B cell (primary cell): ENCODE measurements at regions of chr7 and their contacts with region 1.

Region 1: DNA sequence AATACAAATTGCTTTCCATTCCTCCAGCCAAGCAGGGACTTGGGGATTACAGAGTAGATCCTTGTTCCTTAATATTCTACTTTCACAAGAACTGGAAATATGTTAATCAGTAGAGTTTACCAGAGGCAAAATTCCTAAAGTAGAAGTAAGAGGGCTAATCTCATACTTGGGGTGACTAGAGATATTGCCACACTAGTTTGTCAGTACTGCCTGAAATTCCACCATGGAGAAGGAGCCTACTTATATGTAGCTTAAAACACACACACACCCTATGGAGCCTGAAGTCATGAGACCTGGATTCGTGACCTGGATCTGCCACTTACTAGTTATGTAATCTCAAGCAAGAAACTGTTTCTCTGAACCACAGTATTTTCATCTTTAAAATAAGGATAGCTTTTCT is 33.9 kb downstream of the STRIP2 start:
- DNase-seq: no peak
- ATAC-seq: no peak
- H3K4me3 ChIP-seq: no peak overlapping the region
- H3K4me3 Mint-ChIP-seq: no peak overlapping the region
- H3K27ac ChIP-seq: no peak overlapping the region
- H3K27ac Mint-ChIP-seq: no peak overlapping the region
- H3K4me1 ChIP-seq: no peaks in the 10 kb centered on the region
- H3K4me1 Mint-ChIP-seq: peaks cover 1% of the 10 kb centered on the region
- H3K27me3 ChIP-seq: no peaks in the 10 kb centered on the region
- H3K27me3 Mint-ChIP-seq: no peaks in the 10 kb centered on the region
- CTCF ChIP-seq: no peak

Region 2: GRCh38 chr7:129343099-129343700 is 124.9 kb before region 1 on chr7:
- CTCF ChIA-PET with region 1: interaction called, 24 read pairs
- POLR2A ChIA-PET with region 1: no interaction called
- intact Hi-C with region 1: no loop called
- DNase-seq: peak; percentile 58
- ATAC-seq: no peak
- H3K4me3 ChIP-seq: no peak overlapping the region
- H3K4me3 Mint-ChIP-seq: no peak overlapping the region
- H3K27ac ChIP-seq: no peak overlapping the region
- H3K27ac Mint-ChIP-seq: no peak overlapping the region
- H3K4me1 ChIP-seq: no peaks in the 10 kb centered on the region
- H3K4me1 Mint-ChIP-seq: peaks cover 4% of the 10 kb centered on the region
- H3K27me3 ChIP-seq: no peaks in the 10 kb centered on the region
- H3K27me3 Mint-ChIP-seq: no peaks in the 10 kb centered on the region
- CTCF ChIP-seq: peak; percentile 90

Region 3: GRCh38 chr7:129401967-129402860 is 65.9 kb before region 1 on chr7:
- CTCF ChIA-PET with region 1: interaction called, 4 read pairs
- POLR2A ChIA-PET with region 1: no interaction called
- intact Hi-C with region 1: loop called (anchors 1 kb)
- DNase-seq: peak; percentile 14
- ATAC-seq: no peak
- H3K4me3 ChIP-seq: no peak overlapping the region
- H3K4me3 Mint-ChIP-seq: no peak overlapping the region
- H3K27ac ChIP-seq: no peak overlapping the region
- H3K27ac Mint-ChIP-seq: no peak overlapping the region
- H3K4me1 ChIP-seq: no peaks in the 10 kb centered on the region
- H3K4me1 Mint-ChIP-seq: no peaks in the 10 kb centered on the region
- H3K27me3 ChIP-seq: no peaks in the 10 kb centered on the region
- H3K27me3 Mint-ChIP-seq: no peaks in the 10 kb centered on the region
- CTCF ChIP-seq: peak; percentile 24